Calu3 (cell line): ENCODE measurements at regions of chr3 and their contacts with region 1.

Region 1: DNA sequence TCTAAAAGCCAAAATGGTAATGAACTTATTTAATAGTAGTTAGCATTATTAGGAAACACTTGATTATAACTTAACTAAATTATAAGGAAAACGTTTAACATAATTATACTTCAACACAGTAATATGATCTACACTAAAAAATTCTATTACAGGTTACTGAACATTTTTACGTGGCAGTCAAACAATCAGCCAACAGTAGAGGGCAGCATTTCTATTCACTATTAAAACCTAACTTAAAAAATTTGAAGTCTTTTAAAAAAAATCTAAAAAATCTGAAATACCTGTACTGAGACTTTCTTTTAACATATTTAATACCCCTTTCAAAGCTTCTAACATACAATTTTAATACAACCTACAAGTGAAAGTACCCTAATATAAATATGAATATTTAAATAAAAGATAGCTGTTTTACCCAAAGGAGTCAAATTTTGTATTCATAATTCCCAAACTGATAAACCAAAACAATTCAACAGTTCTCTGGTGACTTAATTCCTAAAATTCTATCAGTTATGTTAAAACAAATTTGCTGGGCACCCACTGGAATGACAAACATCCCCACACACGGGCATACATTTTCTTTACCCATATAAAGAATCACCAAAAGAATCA is 41.5 kb downstream of the DLG1 start:
- DNase-seq: peak; percentile 27
- H3K4me3 Mint-ChIP-seq: no peak overlapping the region
- H3K27ac Mint-ChIP-seq: no peak overlapping the region
- H3K4me1 Mint-ChIP-seq: peaks cover 8% of the 10 kb centered on the region
- H3K27me3 Mint-ChIP-seq: no peaks in the 10 kb centered on the region
- CTCF ChIP-seq: peak; percentile 28

Region 2: DNA sequence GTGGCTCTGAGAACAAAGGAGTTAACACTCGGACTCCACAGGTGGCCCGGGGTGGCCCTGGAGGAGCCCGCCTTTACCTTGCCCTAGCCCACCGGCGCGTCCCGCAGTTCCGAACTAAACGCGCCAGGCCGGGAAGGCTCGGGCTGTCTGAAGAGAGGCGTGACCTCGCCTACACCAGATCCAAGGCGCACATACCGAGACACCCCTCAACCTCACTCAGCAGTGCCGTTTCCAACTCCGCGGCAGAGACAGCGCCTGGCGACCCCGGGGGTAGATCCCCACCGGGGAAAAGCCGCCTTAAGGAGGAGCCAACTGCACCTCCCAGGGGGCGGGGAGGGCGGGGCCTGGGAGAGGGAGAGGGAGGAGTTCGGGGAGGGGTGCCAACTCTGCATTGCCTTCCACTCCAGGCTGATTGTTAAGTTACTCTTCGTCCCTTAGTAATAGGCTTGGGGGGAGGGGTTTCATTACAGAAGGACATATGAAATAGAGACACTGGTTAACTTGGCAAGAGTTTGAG is 41.5 kb after region 1 on chr3 and contains the start of gene DLG1:
- CTCF ChIA-PET with region 1: no interaction called
- intact Hi-C with region 1: loop called (anchors 5 kb)
- DNase-seq: peak; percentile 85
- H3K4me3 Mint-ChIP-seq: peak within 1 kb of the TSS; percentile 96
- H3K27ac Mint-ChIP-seq: peak within 1 kb of the TSS; percentile 91
- H3K4me1 Mint-ChIP-seq: peaks cover 29% of the 10 kb centered on the region
- H3K27me3 Mint-ChIP-seq: no peaks in the 10 kb centered on the region
- CTCF ChIP-seq: no peak
- total RNA-seq, gene DLG1: 105 and 127 TPM in 2 replicates